ENCODE measurements at regions of chr2 and their contacts with region 1.

Region 1: DNA sequence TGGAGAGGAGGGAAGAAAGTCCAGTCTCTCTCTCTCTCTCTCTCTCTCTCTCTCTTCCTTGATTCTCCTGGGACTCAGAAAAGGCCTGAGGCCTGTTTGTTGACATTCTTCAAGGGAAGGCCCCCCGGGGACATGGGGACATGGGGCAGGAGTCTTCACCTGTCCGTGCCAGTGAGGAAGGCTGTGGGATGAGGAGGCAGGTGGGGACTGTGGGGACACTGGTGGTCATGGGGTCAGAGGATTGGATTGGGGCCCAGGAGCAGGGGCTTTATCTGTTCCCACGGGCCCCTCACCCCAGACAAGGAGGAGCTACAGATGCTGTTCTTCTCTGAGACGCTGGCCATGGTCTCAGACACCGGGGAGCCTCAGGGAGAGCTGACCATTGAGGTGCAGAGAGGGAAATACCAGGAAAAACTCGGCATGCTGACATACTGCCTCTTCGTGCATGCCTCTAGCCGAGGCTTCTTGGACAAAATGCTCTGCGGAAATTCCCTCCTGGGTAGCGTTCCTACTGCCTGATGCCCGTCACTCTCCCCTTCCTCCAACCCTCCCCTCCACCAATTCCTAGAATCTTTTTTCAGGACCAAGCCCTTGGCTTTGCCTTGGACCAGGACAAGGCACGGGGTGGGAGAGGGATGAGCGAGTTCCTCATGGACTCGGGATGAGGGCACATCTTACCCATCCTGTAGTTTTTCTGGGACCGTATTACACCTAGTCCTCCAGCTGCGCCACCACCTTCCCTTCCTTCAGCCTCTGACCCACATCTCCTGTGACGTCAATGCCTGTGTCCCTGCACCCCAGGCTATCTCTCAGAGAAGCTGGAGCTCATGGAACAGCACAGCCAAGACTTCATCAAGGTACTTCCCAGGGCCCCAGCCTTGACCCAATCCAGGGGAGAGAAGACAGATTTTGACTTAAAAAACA is 841 bp downstream of the CATIP start:
- DNase-seq: no peak
- H3K4me3 Mint-ChIP-seq: no peak overlapping the region
- H3K27ac Mint-ChIP-seq: no peak overlapping the region
- H3K4me1 Mint-ChIP-seq: no peaks in the 10 kb centered on the region
- H3K27me3 Mint-ChIP-seq: peaks cover 5% of the 10 kb centered on the region

Region 2: GRCh38 chr2:218269899-218270720 is 87.4 kb before region 1 on chr2 and contains the starts of genes AAMP and PNKD:
- CTCF ChIA-PET with region 1: interaction called, 52 read pairs
- POLR2A ChIA-PET with region 1: interaction called, 7 read pairs
- DNase-seq: peak; percentile 100
- H3K4me3 Mint-ChIP-seq: peak within 1 kb of the TSS; percentile 89
- H3K27ac Mint-ChIP-seq: peak within 1 kb of the TSS; percentile 75
- H3K4me1 Mint-ChIP-seq: peaks cover 52% of the 10 kb centered on the region
- H3K27me3 Mint-ChIP-seq: no peaks in the 10 kb centered on the region
- total RNA-seq, gene AAMP: 44.2 to 46.8 TPM
- total RNA-seq, gene PNKD: 30.1 to 31.8 TPM

Region 3: DNA sequence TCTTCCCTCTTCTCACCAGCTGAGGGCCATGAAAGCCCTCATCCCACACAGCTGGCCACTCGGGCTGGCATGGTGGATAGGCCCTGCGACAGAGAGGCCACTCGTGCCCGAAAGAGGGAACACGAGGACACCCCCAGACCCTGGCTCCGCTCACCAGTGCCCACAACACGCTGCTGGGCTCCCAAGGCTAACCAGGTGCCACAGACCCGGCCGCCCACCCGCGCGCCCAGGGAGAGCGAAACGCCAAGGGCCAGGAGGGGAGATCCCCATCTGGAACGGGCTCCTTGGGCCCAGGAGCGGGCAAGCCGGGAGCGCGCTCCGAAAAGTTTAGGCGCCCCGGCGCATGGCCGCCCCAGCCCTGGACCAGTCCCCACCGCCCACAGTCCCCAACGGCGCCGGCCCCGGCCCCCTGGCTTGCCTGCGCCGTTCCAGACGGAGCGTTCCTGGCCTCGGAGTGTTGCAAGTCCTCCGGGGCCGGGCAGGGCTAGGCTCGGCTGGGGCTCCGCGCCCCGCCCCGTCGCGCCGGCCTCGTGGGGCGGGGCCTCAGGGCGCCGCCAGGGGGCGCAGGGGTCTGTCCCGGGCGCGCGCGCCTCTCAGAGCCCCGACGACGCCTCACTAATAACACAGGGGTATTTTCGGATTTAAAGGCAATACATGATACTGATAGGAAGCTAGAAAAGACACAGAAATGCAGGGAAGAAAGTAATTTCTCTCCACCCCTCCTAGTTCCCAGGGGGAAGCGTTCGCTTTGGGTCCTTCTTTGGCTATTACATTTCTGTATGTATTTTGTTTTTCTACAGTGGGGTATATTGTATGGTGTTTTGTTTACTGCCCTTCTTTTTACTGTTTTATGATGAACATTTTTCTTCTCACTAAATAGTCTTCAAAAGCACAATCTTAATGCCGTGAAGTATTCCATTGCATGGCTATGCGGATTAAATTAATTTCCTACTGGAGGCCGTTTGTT is 65.2 kb before region 1 on chr2 and contains the start of gene TMBIM1:
- CTCF ChIA-PET with region 1: interaction called, 16 read pairs
- POLR2A ChIA-PET with region 1: interaction called, 3 read pairs
- DNase-seq: peak; percentile 84
- H3K4me3 Mint-ChIP-seq: peak within 1 kb of the TSS; percentile 82
- H3K27ac Mint-ChIP-seq: peak within 1 kb of the TSS; percentile 95
- H3K4me1 Mint-ChIP-seq: peaks cover 69% of the 10 kb centered on the region
- H3K27me3 Mint-ChIP-seq: no peaks in the 10 kb centered on the region
- total RNA-seq, gene TMBIM1: 105 to 107 TPM

Region 4: GRCh38 chr2:218301176-218301819 is 56.2 kb before region 1 on chr2:
- CTCF ChIA-PET with region 1: interaction called, 40 read pairs
- POLR2A ChIA-PET with region 1: interaction called, 4 read pairs
- DNase-seq: peak; percentile 91
- H3K4me3 Mint-ChIP-seq: no peak overlapping the region
- H3K27ac Mint-ChIP-seq: no peak overlapping the region
- H3K4me1 Mint-ChIP-seq: peaks cover 8% of the 10 kb centered on the region
- H3K27me3 Mint-ChIP-seq: no peaks in the 10 kb centered on the region

Region 5: GRCh38 chr2:218317232-218317630 is 40.3 kb before region 1 on chr2:
- CTCF ChIA-PET with region 1: interaction called, 10 read pairs
- POLR2A ChIA-PET with region 1: no interaction called
- DNase-seq: no peak
- H3K4me3 Mint-ChIP-seq: no peak overlapping the region
- H3K27ac Mint-ChIP-seq: peak overlapping the region; percentile 88
- H3K4me1 Mint-ChIP-seq: peaks cover 29% of the 10 kb centered on the region
- H3K27me3 Mint-ChIP-seq: peaks cover 2% of the 10 kb centered on the region

Region 6: DNA sequence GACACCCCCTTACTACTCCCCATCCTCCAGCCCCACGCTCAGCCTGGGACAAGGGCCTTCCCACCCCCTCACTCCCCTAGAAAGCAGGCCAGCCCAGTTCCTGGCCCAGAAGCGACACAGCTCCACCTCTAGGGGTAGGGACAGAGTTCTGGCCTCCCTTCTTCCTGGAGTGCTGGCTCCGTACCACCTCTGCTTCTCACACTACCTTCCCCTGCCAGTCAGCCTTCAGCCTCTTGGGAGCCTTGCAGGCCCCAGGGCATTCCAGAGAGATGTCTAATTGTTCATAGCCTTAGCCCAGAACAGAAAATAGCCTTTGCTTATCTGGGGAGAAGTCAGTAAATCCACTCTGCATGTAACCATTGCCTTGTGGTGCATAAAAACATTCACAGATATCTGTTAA is 13.9 kb before region 1 on chr2:
- CTCF ChIA-PET with region 1: interaction called, 20 read pairs
- POLR2A ChIA-PET with region 1: no interaction called
- DNase-seq: no peak
- H3K4me3 Mint-ChIP-seq: no peak overlapping the region
- H3K27ac Mint-ChIP-seq: no peak overlapping the region
- H3K4me1 Mint-ChIP-seq: no peaks in the 10 kb centered on the region
- H3K27me3 Mint-ChIP-seq: no peaks in the 10 kb centered on the region

Region 7: GRCh38 chr2:218727502-218728165 is 370.1 kb after region 1 on chr2:
- CTCF ChIA-PET with region 1: no interaction called
- POLR2A ChIA-PET with region 1: no interaction called
- DNase-seq: no peak
- H3K4me3 Mint-ChIP-seq: no peak overlapping the region
- H3K27ac Mint-ChIP-seq: no peak overlapping the region
- H3K4me1 Mint-ChIP-seq: peaks cover 21% of the 10 kb centered on the region
- H3K27me3 Mint-ChIP-seq: no peaks in the 10 kb centered on the region

Measured in activated CD4-positive, alpha-beta memory T cell treated with anti-CD3 and anti-CD28 coated beads, Interleukin-2, amount 10 ng/mL, durations not matched to agents 7 days and 5 days (primary cell).